Left cardiac atrium (tissue), 4 donors: ENCODE measurements at regions of chr12 and their contacts with region 1.

Region 1: DNA sequence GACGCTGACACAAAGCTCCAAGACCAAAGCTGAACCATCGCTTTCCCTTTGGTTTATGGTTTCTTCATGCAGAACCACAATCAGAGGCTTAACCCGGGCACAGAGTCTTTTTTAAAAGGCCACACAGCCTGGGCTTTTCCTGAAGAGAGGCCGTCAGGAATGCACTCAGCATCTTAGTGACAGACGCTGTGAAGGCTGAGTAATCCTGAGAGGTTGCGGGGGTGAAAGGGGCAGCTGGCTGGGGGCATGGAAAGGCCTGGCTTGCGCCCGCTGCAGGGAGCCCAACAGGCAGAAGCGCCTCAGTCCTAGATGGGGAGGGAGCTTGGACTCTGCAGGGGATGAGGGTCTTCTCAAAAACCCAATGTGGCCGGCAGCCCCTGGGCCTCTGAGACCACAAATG is 13.6 kb downstream of the CTDSP2 start:
- DNase-seq: no peak
- ATAC-seq: peak in 1 of 2 donors; percentile 5

Region 2: DNA sequence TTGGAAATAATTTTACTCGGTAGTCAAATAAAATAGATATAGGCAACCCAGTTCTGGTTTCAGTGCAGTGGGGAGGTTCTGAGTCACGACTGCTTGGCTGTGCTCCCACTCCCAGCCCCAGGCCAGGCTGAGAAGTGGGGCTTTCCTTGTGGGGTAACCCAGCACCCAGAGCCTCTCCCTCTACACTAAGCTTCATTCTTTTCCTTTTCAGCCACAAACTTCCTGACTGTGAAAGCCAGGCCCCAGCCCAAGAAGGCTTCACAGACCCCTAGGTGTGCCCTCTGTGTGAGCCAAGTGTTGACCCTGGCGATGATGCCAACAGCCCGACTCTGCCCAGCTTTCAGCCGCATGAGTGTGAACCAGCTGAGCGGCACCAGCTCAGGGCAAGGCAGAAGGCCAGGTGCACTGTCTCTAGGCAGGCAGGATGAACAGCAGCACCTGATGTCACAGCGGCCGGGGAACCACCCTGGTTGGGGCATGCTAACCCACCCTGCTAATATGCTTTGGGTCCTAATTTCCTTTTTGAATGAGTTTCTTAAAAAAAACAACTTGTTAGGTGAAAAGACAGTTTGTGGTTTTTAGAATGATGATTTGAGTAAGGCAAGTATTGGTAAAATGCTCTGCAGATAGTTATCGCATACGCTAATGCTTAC is 66.2 kb after region 1 on chr12:
- intact Hi-C with region 1: loop called (anchors 2 kb)
- DNase-seq: no peak
- ATAC-seq: peak in 1 of 2 donors; percentile 64